ENCODE measurements at regions of chr12 and their contacts with region 1.

Region 1: DNA sequence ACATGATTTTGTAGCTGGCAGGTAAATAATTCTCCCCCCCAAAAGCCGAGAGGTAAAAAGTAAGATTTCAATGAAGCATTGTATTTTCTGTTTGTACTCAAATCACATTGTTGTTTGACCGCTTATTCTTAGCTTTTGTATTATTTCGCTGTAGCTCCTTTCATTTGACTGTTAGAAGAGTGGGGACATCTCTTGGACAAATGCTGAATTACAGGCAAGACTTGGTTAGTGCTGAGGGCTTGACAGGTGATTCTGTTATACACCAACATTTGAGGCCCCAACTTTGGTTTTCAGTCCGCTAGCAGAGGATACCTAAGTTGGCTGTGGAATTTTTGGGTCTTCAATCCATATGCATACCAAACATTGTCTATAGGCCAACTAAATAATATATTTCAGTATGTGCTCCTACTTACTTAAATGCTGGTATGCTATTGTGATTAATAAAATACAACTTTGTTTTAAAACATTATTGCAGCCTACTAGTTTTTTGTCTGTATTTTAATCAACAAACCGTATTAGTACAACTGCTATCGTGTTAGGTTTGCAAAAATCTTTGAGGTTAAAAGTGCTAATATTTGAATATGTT is 102.2 kb downstream of the ERC1 start:
- DNase-seq: peak in 1 of 5 donors; percentile 16
- ATAC-seq: peak in 3 of 4 donors; percentile 63 to 69 (median 67)
- H3K4me3 ChIP-seq: no peak overlapping the region
- H3K27ac ChIP-seq: no peak overlapping the region
- H3K4me1 ChIP-seq: peaks cover 0 to 17% (median 4%) of the 10 kb centered on the region in 12 donors
- H3K27me3 ChIP-seq: no peaks in the 10 kb centered on the region
- CTCF ChIP-seq: peak; percentile 54 to 80 (median 74)
- POLR2A ChIP-seq: no peak

Region 2: DNA sequence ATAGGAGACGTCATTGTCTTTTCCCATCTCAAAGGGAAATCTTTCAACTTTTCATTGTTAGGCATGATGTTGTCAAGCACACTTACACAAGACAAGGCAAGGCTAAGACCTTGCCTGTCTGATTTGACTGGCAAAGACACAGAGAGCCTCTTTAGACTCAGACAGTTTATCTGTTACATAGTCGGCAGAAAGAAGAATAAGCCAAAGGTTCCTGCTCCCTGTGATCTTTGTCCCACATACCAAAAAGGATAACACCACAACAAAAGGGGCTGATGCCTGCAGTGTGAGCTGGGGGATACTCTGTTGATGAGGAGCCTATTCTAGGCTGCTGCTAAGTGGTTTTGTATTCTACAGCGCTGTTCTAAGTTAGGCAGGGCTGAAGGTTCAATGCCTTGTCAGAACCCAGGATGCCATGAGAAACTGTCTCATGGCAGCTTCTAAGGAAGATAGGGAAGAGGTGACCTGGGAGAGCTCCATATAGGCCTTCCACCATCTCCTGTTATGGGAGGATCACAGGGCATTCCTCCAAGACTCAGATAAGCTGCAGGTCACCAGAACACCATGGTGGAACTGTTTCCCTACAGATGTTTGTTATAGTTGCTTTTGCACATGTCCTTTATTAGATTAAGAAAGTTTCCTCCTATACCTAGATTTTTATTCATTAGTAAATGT is 89.5 kb before region 1 on chr12:
- intact Hi-C with region 1: loop called in 4 of 10 experiments (anchors 10 kb)
- DNase-seq: no peak
- ATAC-seq: peak; percentile 49 to 74 (median 61)
- H3K4me3 ChIP-seq: no peak overlapping the region
- H3K27ac ChIP-seq: peak overlapping the region in 8 of 12 donors; percentile 8 to 65 (median 32)
- H3K4me1 ChIP-seq: peaks cover 0 to 26% (median 8%) of the 10 kb centered on the region in 12 donors
- H3K27me3 ChIP-seq: no peaks in the 10 kb centered on the region
- CTCF ChIP-seq: no peak
- POLR2A ChIP-seq: no peak

Region 3: DNA sequence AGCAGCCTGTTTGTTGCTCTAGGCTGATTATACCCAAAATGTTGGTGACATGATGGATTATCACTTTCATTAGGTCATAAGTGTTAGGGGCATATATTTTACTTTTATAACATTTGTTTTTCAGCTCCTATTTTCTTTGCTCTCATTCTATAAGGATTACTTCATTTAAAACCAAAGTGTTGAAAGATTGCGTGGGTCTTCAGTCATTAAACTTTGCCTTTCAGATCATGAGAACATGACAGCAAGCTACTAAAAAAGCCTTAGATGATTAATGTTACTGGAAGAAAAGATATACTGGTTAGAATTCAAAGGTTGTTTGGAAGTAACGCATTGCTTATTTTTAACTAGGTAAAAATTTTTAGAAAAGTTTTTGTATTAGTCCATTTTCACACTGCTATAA is 54.6 kb after region 1 on chr12:
- intact Hi-C with region 1: no loop called
- DNase-seq: no peak
- ATAC-seq: no peak
- H3K4me3 ChIP-seq: no peak overlapping the region
- H3K27ac ChIP-seq: no peak overlapping the region
- H3K4me1 ChIP-seq: no peaks in the 10 kb centered on the region
- H3K27me3 ChIP-seq: no peaks in the 10 kb centered on the region
- CTCF ChIP-seq: no peak
- POLR2A ChIP-seq: no peak

Measured in heart left ventricle (tissue), 16 donors.